Activated CD4-positive, alpha-beta T cell treated with anti-CD3 and anti-CD28 coated beads for 36 hours (primary cell): ENCODE measurements at regions of chrX and their contacts with region 1.

Region 1: GRCh38 chrX:15242899-15243555 is 26.9 kb downstream of the ASB9 start:
- DNase-seq: peak; percentile 52
- ATAC-seq: no peak
- H3K4me3 Mint-ChIP-seq: no peak overlapping the region
- H3K27ac Mint-ChIP-seq: no peak overlapping the region
- H3K4me1 Mint-ChIP-seq: peaks cover 9% of the 10 kb centered on the region
- H3K27me3 Mint-ChIP-seq: no peaks in the 10 kb centered on the region

Region 2: GRCh38 chrX:14039344-14039743 is 1203.7 kb before region 1 on chrX:
- CTCF ChIA-PET with region 1: no interaction called
- POLR2A ChIA-PET with region 1: no interaction called
- intact Hi-C with region 1: loop called (anchors 2 kb)
- DNase-seq: peak; percentile 71
- ATAC-seq: peak; percentile 68
- H3K4me3 Mint-ChIP-seq: no peak overlapping the region
- H3K27ac Mint-ChIP-seq: no peak overlapping the region
- H3K4me1 Mint-ChIP-seq: no peaks in the 10 kb centered on the region
- H3K27me3 Mint-ChIP-seq: no peaks in the 10 kb centered on the region

Region 3: GRCh38 chrX:14095702-14096101 is 1147.3 kb before region 1 on chrX:
- CTCF ChIA-PET with region 1: no interaction called
- POLR2A ChIA-PET with region 1: no interaction called
- intact Hi-C with region 1: loop called in 1 of 2 experiments (anchors 1 kb)
- DNase-seq: peak; percentile 59
- ATAC-seq: peak; percentile 63
- H3K4me3 Mint-ChIP-seq: no peak overlapping the region
- H3K27ac Mint-ChIP-seq: no peak overlapping the region
- H3K4me1 Mint-ChIP-seq: no peaks in the 10 kb centered on the region
- H3K27me3 Mint-ChIP-seq: peaks cover under 1% of the 10 kb centered on the region

Region 4: DNA sequence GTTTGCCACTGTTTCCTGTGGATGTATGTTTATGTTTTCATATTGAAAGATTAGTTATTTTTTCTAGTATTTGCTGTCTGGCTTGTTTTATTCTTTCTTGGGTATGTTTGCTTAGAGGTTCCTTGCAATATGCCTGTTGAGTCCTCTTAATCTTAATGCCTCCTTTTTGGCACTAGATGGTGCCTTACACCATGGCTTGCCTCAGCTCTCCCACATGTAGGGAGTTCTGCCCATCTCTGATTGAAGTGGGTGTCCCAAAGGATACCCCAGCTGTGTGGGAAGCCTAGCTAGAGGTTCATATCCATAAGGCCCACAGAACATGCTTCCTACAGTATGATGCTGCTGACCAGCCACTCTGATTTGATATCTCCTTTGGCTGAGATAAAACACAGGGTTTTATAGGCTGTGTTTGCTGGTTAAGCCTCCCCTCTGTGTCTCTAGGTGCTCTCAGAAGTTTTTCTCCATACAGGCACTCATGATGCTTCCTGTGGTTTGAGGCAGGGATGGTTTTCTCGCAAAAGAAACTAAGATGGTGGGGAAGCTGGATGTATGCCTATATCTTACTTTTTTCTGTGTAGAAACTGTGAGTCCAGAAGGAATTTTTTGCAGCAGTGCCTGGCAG is 135.5 kb before region 1 on chrX:
- CTCF ChIA-PET with region 1: no interaction called
- POLR2A ChIA-PET with region 1: no interaction called
- intact Hi-C with region 1: loop called (anchors 1 kb)
- DNase-seq: no peak
- ATAC-seq: no peak
- H3K4me3 Mint-ChIP-seq: no peak overlapping the region
- H3K27ac Mint-ChIP-seq: no peak overlapping the region
- H3K4me1 Mint-ChIP-seq: no peaks in the 10 kb centered on the region
- H3K27me3 Mint-ChIP-seq: peaks cover 4% of the 10 kb centered on the region

Region 5: DNA sequence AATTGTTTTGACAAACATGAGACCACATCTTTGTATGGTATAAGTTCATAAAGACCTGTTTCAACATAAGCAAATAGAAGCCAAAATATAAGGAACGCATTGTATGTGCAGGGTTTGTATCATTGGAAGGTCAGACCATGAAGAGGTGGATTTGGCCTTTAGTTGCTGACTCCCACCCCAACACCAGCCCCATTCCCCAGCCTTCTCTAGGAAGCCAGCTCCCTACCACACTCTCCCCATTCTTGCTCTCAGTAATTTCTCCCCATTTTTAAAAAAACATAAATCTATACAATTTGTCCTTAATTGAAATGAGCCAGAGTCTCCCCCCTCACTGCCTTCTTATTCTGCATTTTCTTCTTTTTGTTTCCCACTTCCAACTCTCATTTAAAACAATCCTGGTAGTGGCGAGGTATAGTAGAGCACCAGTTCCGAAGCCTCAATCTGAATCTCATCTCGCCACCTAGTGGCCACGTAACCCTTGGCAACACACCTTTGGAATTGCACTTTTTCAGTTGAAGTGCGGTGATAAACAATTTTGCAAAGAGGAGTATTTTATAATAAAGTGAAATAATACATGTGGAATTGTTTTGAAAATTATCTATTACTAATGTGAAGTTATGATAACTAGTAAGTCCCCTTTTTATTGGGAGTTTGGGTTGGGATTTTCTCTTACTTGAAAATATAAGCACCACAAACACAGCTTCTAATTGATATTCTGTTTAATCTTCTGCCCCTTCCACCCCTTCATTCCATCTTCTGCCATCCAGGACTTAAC is 99.8 kb before region 1 on chrX:
- CTCF ChIA-PET with region 1: interaction called, 4 read pairs
- POLR2A ChIA-PET with region 1: no interaction called
- intact Hi-C with region 1: loop called in 1 of 2 experiments (anchors 2 kb)
- DNase-seq: peak; percentile 70
- ATAC-seq: peak; percentile 60
- H3K4me3 Mint-ChIP-seq: no peak overlapping the region
- H3K27ac Mint-ChIP-seq: no peak overlapping the region
- H3K4me1 Mint-ChIP-seq: peaks cover 13% of the 10 kb centered on the region
- H3K27me3 Mint-ChIP-seq: no peaks in the 10 kb centered on the region

Region 6: DNA sequence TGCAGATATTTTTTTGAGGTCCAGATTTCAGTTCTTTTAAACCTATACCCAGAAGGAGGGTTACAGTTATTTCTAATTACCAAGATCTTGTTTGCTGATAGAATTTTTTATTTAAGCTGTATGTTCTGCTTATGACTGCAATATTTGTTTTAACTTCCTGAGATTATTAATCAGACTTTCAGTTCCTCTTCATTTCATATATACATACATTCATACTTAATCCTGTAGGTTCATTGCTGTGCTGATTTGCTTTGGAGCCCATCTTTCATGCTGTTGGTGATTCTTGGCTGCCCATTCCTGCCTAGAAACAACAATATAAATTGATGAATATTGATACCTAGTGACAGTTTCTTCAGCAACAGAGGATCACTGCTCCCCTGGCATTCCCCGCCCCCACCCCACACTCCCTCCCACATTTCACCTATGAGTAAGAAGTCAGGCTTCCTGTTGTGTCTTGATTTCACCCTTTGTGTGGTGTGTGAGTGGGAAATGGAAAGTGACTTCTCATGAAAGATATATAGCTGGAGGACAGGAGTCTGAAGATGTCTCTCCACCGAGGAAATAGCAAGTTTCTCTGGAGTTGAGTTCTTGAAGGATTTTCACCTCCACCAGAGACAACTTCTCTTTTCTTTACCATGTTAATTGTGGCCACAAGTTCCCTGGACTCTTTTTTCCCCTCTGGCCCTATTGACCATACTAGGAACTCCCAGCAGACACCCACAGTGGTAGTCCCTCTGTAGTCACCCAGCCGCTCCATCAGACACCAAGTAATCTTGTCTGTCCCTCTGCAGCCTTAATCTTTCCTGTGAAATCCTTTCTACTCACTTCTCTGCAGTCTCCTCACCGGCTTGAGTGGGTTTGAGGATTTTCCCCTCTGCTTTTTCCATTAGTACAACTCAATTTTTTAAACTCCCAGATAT is 91.5 kb before region 1 on chrX:
- CTCF ChIA-PET with region 1: interaction called, 4 read pairs
- POLR2A ChIA-PET with region 1: no interaction called
- intact Hi-C with region 1: loop called in 1 of 2 experiments (anchors 10 kb)
- DNase-seq: peak; percentile 56
- ATAC-seq: peak; percentile 92
- H3K4me3 Mint-ChIP-seq: no peak overlapping the region
- H3K27ac Mint-ChIP-seq: peak overlapping the region; percentile 70
- H3K4me1 Mint-ChIP-seq: peaks cover 16% of the 10 kb centered on the region
- H3K27me3 Mint-ChIP-seq: peaks cover 14% of the 10 kb centered on the region

Region 7: DNA sequence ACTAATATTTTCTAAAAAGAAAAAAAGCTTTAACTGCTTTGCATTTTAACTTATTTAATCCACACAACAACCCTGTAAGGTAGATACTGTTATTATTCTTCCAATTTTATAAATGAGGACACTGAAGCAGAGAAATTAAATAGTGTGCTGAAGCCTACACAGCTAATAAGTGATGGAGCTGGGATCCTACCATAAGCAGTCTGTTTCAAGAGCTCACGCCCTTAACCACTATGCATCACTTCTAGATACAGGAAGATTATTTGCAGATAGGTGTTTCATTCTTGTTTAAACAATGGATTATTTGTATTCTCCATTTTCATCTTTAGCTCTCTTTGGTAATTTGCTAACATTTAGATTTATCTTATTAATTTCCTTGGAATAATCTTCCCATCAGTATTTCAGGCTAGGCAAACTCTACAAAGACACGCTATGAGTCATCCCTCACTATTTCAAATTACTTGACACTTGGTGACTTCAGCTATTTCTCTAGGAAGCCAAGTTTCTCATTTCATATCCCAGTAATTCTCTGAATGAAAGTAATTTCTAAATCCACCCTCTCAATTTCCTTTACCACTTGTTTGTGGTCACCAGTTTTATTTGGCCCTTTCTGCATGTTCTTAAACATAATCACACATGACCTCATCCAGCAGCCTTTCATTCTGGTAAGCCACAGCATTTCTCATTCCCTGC is 40.4 kb before region 1 on chrX:
- CTCF ChIA-PET with region 1: no interaction called
- POLR2A ChIA-PET with region 1: no interaction called
- intact Hi-C with region 1: loop called (anchors 1 to 2 kb)
- DNase-seq: no peak
- ATAC-seq: peak; percentile 45
- H3K4me3 Mint-ChIP-seq: no peak overlapping the region
- H3K27ac Mint-ChIP-seq: no peak overlapping the region
- H3K4me1 Mint-ChIP-seq: peaks cover 42% of the 10 kb centered on the region
- H3K27me3 Mint-ChIP-seq: peaks cover 8% of the 10 kb centered on the region

Region 8: GRCh38 chrX:15416133-15416993 is 173.3 kb after region 1 on chrX:
- CTCF ChIA-PET with region 1: no interaction called
- POLR2A ChIA-PET with region 1: no interaction called
- intact Hi-C with region 1: no loop called
- DNase-seq: peak; percentile 3
- ATAC-seq: peak; percentile 36
- H3K4me3 Mint-ChIP-seq: no peak overlapping the region
- H3K27ac Mint-ChIP-seq: no peak overlapping the region
- H3K4me1 Mint-ChIP-seq: no peaks in the 10 kb centered on the region
- H3K27me3 Mint-ChIP-seq: no peaks in the 10 kb centered on the region

Region 9: GRCh38 chrX:15797707-15798106 is 554.7 kb after region 1 on chrX:
- CTCF ChIA-PET with region 1: no interaction called
- POLR2A ChIA-PET with region 1: no interaction called
- intact Hi-C with region 1: no loop called
- DNase-seq: no peak
- ATAC-seq: no peak
- H3K4me3 Mint-ChIP-seq: no peak overlapping the region
- H3K27ac Mint-ChIP-seq: peak overlapping the region; percentile 37
- H3K4me1 Mint-ChIP-seq: peaks cover 29% of the 10 kb centered on the region
- H3K27me3 Mint-ChIP-seq: no peaks in the 10 kb centered on the region